Activated B cell treated with CpG ODN at 0.5 μM for 24 hours (primary cell): ENCODE measurements at regions of chr9 and their contacts with region 1.

Region 1: DNA sequence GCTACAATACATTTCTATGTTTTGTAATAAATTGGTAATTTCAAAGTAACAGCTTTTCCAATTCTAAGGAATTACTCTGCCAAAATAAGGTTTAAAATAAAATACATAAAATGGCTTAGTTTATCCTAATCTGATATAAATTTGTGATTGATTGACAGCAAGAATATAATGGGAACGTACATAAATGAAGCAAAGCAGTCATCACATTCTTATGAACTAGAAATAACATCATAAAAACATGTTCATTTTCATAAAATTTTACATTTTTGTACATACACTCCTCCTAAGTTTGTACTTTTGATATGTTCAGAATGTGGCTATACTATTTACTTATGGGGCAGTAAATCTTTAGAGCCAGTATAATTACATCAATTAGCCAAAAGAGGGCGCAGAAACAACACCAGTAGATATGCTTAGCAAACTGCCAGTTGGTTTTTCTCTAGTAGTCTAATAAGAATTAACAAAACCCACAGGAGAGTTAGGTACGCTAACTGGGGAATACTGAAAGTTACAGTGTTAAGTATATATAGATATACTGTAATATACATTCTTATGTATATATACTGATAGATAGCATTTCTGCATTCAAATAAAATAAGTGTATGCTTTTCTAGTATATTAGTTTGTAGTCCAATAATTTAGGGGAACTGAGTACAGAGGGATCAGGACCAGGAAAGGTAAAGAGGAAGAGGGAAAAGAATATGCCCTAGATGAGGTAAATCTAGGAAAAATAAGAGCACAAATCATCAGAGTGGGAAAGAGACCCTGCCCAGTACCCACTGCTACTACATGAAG is 76.8 kb downstream of the ZDHHC21 start:
- DNase-seq: no peak
- ATAC-seq: peak; percentile 57
- H3K4me3 Mint-ChIP-seq: no peak overlapping the region
- H3K27ac Mint-ChIP-seq: no peak overlapping the region
- H3K4me1 Mint-ChIP-seq: no peaks in the 10 kb centered on the region
- H3K27me3 Mint-ChIP-seq: no peaks in the 10 kb centered on the region
- CTCF ChIP-seq: peak; percentile 80

Region 2: DNA sequence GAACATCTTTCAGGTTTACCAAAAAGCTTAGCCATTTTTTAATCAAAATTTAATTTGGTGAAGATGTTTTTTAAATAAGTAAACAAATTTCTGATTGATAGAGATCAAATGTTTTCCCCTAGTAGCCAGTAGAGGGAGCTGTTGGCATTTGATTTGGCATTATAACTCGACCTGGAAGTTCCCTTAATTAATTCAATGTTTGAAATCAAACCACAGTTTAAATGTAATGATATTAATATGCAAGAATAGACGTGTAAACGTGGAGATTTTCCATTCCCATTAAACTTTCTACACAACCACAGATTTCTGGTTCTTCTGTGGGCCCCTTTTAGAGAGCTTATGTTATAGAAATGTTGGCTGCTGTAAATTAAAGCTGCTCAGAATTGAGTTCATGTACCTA is 1188.8 kb before region 1 on chr9:
- CTCF ChIA-PET with region 1: no interaction called
- POLR2A ChIA-PET with region 1: no interaction called
- intact Hi-C with region 1: loop called (anchors 10 kb)
- DNase-seq: no peak
- ATAC-seq: no peak
- H3K4me3 Mint-ChIP-seq: no peak overlapping the region
- H3K27ac Mint-ChIP-seq: no peak overlapping the region
- H3K4me1 Mint-ChIP-seq: no peaks in the 10 kb centered on the region
- H3K27me3 Mint-ChIP-seq: no peaks in the 10 kb centered on the region
- CTCF ChIP-seq: no peak

Region 3: DNA sequence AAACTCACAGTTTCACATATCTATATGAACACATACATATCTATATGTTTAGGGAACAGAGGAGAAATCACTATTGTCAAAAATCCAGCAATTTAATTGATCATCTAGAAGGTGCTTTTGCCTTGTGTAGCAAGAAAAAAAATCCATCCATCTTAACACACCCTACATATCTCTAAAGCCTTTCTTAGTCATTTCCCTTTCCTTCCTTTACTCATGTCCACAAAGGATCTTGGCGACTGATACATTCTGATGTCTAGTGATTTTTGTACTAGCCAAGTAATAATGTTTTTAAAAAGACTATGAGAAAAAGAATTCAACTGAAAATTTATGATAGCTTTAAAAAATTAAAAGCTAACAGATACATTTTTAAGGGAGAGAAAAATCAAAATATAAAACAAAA is 54.3 kb after region 1 on chr9:
- CTCF ChIA-PET with region 1: no interaction called
- POLR2A ChIA-PET with region 1: no interaction called
- intact Hi-C with region 1: no loop called
- DNase-seq: no peak
- ATAC-seq: no peak
- H3K4me3 Mint-ChIP-seq: no peak overlapping the region
- H3K27ac Mint-ChIP-seq: no peak overlapping the region
- H3K4me1 Mint-ChIP-seq: peaks cover 8% of the 10 kb centered on the region
- H3K27me3 Mint-ChIP-seq: no peaks in the 10 kb centered on the region
- CTCF ChIP-seq: no peak

Region 4: DNA sequence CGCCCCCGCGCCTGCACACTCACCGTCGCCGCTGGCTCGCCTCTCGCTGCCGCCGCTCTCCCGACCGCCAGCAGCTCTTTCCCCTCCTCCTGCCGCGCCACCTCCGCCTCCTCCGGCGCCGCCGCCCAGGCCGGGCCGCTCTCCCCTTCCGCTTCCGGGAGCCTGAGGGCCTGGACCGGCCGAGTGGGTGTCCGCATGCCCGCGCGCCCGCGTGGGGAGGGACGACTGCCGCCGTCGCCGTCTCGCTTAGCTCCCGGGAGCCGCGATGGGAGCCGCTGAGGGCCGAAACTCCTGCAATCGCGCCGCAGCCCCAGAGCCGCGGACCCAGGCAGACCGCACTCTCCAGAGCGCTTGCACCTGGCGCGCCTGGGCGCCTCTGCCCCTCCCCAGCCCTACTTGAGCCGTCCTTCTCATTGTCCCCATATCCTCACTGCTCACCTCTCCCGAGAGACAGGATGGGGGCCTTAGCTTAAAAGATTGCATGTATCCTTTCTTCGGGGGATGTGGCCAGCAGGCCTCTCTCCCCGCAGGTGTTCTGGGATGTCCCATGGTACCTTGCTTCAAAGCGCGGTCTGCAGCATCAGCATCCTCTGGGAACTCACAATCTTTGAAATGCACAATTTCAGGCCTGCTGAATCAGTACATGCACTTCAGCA is 76.9 kb after region 1 on chr9 and contains the start of gene ZDHHC21:
- CTCF ChIA-PET with region 1: no interaction called
- POLR2A ChIA-PET with region 1: no interaction called
- intact Hi-C with region 1: loop called (anchors 1 kb)
- DNase-seq: peak; percentile 60
- ATAC-seq: peak; percentile 75
- H3K4me3 Mint-ChIP-seq: peak within 1 kb of the TSS; percentile 94
- H3K27ac Mint-ChIP-seq: peak within 1 kb of the TSS; percentile 93
- H3K4me1 Mint-ChIP-seq: peaks cover 51% of the 10 kb centered on the region
- H3K27me3 Mint-ChIP-seq: no peaks in the 10 kb centered on the region
- CTCF ChIP-seq: no peak
- total RNA-seq, gene ZDHHC21: 22.6 and 29.4 TPM in 2 replicates

Region 5: GRCh38 chr9:14846871-14847311 is 230.5 kb after region 1 on chr9:
- CTCF ChIA-PET with region 1: no interaction called
- POLR2A ChIA-PET with region 1: no interaction called
- intact Hi-C with region 1: loop called (anchors 1 kb)
- DNase-seq: peak; percentile 16
- ATAC-seq: peak; percentile 31
- H3K4me3 Mint-ChIP-seq: no peak overlapping the region
- H3K27ac Mint-ChIP-seq: no peak overlapping the region
- H3K4me1 Mint-ChIP-seq: no peaks in the 10 kb centered on the region
- H3K27me3 Mint-ChIP-seq: peaks cover 10% of the 10 kb centered on the region
- CTCF ChIP-seq: no peak

Region 6: GRCh38 chr9:15142878-15143534 is 526.6 kb after region 1 on chr9:
- CTCF ChIA-PET with region 1: no interaction called
- POLR2A ChIA-PET with region 1: no interaction called
- intact Hi-C with region 1: loop called (anchors 2 kb)
- DNase-seq: no peak
- ATAC-seq: peak; percentile 37
- H3K4me3 Mint-ChIP-seq: no peak overlapping the region
- H3K27ac Mint-ChIP-seq: no peak overlapping the region
- H3K4me1 Mint-ChIP-seq: no peaks in the 10 kb centered on the region
- H3K27me3 Mint-ChIP-seq: peaks cover 2% of the 10 kb centered on the region
- CTCF ChIP-seq: no peak